Activated B cell treated with CpG ODN at 0.5 μM for 24 hours (primary cell): ENCODE measurements at regions of chr4 and their contacts with region 1.

Region 1: DNA sequence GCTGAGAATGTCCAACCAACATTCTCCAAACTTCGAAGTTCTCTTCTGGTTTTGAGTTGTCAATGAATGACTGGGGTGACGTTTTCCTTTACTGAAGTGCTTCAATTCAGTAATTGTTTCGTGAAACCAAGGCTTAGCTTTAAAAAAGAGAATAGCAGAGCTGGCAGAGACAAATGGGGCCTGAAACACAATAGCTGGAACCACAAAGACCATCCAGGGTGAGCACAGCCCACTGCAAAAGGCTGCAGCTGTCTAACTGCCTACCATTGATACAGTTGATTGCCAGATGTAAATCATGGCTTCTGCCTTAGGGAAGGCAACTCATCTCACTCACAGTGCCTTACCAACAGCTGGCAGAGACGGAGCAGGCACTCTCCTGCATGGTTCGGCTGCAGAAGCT is 78.7 kb upstream of the ZNF518B start:
- DNase-seq: no peak
- ATAC-seq: no peak
- H3K4me3 Mint-ChIP-seq: no peak overlapping the region
- H3K27ac Mint-ChIP-seq: no peak overlapping the region
- H3K4me1 Mint-ChIP-seq: peaks cover 5% of the 10 kb centered on the region
- H3K27me3 Mint-ChIP-seq: peaks cover 7% of the 10 kb centered on the region
- CTCF ChIP-seq: no peak

Region 2: DNA sequence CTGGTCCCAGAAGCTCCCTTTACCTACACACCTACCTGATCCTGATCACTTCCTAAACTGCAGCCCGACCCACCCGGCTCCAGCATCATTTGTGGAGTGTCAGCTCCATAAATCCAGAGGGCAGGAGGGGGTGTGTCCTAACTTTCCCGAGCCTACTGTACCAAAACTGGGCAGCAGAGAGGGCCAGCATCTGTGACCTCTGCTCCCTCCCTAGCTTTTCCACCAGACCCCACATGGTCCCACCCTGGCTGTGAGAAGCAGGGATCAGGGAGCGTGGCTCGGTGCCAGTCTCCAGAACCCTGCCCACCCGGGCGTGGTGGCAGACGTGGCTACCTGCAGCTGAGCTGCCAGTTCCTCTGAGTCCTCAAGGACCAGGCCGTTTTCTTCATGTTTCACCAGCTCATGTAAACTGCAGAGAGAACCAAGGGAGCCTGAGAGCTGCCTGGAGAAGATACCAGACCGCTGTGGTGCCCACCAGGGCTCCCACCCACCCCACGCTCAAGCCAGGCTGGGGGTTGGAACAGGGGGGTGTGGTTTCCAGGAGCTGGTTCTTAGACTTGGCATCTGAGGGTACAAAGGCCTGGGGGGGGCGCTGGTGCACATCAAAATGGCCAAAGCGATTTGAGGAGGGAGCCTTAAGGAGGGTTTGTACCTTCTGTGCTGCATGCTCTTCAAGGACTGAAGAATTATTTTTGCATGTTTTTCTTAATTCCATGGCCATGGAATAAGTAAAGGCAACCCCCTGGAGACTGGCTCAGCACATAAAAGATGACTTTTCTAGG is 831.2 kb before region 1 on chr4:
- CTCF ChIA-PET with region 1: no interaction called
- POLR2A ChIA-PET with region 1: no interaction called
- intact Hi-C with region 1: loop called (anchors 5 kb)
- DNase-seq: no peak
- ATAC-seq: no peak
- H3K4me3 Mint-ChIP-seq: no peak overlapping the region
- H3K27ac Mint-ChIP-seq: no peak overlapping the region
- H3K4me1 Mint-ChIP-seq: peaks cover 8% of the 10 kb centered on the region
- H3K27me3 Mint-ChIP-seq: peaks cover 3% of the 10 kb centered on the region
- CTCF ChIP-seq: no peak

Region 3: GRCh38 chr4:9762823-9763475 is 773.0 kb before region 1 on chr4:
- CTCF ChIA-PET with region 1: no interaction called
- POLR2A ChIA-PET with region 1: no interaction called
- intact Hi-C with region 1: loop called (anchors 1 kb)
- DNase-seq: no peak
- ATAC-seq: no peak
- H3K4me3 Mint-ChIP-seq: no peak overlapping the region
- H3K27ac Mint-ChIP-seq: no peak overlapping the region
- H3K4me1 Mint-ChIP-seq: no peaks in the 10 kb centered on the region
- H3K27me3 Mint-ChIP-seq: peaks cover 2% of the 10 kb centered on the region
- CTCF ChIP-seq: no peak

Region 4: GRCh38 chr4:10018818-10019461 is 517.0 kb before region 1 on chr4:
- CTCF ChIA-PET with region 1: interaction called, 4 read pairs
- POLR2A ChIA-PET with region 1: no interaction called
- intact Hi-C with region 1: loop called (anchors 2 kb)
- DNase-seq: peak; percentile 85
- ATAC-seq: peak; percentile 99
- H3K4me3 Mint-ChIP-seq: peak overlapping the region; percentile 90
- H3K27ac Mint-ChIP-seq: peak overlapping the region; percentile 88
- H3K4me1 Mint-ChIP-seq: peaks cover 37% of the 10 kb centered on the region
- H3K27me3 Mint-ChIP-seq: no peaks in the 10 kb centered on the region
- CTCF ChIP-seq: peak; percentile 69

Region 5: DNA sequence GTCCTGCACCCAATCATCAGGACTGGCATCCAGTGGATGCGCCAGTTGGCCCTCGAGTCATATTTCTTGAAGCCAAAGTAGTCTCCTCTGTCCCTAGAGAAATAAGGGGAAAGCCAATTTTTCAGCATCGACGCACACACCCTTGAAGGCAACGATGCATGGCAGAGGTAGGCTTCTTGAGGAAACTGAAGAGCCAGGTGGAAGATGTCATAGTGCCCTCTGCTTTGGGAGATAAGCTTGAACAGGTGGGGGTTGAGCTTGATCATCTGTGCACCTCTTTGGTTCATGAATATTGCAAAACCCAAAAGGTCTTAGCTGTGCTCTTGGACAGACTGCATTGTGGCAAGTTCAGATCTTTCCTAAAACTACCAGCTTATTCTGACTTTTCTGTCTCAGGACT is 384.7 kb before region 1 on chr4:
- CTCF ChIA-PET with region 1: interaction called, 15 read pairs
- POLR2A ChIA-PET with region 1: interaction called, 3 read pairs
- intact Hi-C with region 1: no loop called
- DNase-seq: no peak
- ATAC-seq: peak; percentile 97
- H3K4me3 Mint-ChIP-seq: peak overlapping the region; percentile 36
- H3K27ac Mint-ChIP-seq: no peak overlapping the region
- H3K4me1 Mint-ChIP-seq: peaks cover 29% of the 10 kb centered on the region
- H3K27me3 Mint-ChIP-seq: peaks cover 27% of the 10 kb centered on the region
- CTCF ChIP-seq: no peak

Region 6: DNA sequence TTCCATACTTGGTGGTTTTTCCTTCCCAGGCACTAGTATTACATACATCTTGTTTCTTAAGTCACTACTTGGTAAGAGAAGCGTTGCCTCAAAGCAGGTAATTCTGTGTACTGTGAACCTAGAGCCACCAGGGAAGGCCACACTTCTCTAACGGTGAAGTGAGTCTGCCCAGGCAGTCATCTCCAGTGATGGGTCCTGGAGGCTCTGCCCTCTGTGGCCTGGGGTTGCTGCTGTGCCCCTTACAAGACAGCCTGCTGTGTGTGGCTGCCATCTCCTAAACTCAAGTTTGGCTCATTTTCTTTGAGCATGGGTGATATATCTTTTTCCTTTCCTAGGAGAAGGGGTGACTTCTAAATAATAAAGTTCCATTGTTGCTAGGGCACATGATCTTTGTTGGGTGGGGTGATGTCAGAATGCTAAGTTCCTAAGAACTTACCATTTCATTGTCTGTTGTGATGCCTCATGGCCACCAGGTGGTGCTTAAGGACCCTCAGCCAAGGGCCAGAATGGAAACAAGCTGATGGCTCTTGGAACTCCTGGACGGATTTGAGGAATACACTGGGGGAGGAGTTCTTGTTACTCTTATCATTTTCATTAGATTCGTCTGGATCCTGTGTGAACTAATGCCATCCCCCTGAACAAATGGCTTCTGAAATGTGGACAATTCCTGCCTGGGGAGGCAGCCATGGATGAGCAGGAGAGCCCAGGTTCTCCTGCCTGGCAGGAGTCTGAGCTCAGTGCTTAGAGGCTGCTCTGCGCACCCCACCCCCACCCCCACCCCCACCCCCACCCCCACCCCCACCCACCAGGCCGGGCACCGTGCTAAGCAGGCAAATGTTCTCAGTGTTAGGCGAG is 378.2 kb before region 1 on chr4:
- CTCF ChIA-PET with region 1: interaction called, 44 read pairs
- POLR2A ChIA-PET with region 1: no interaction called
- intact Hi-C with region 1: loop called (anchors 1 kb)
- DNase-seq: no peak
- ATAC-seq: peak; percentile 79
- H3K4me3 Mint-ChIP-seq: no peak overlapping the region
- H3K27ac Mint-ChIP-seq: no peak overlapping the region
- H3K4me1 Mint-ChIP-seq: peaks cover 2% of the 10 kb centered on the region
- H3K27me3 Mint-ChIP-seq: peaks cover 24% of the 10 kb centered on the region
- CTCF ChIP-seq: no peak

Region 7: GRCh38 chr4:10164877-10165283 is 371.0 kb before region 1 on chr4:
- CTCF ChIA-PET with region 1: interaction called, 44 read pairs
- POLR2A ChIA-PET with region 1: no interaction called
- intact Hi-C with region 1: no loop called
- DNase-seq: no peak
- ATAC-seq: no peak
- H3K4me3 Mint-ChIP-seq: no peak overlapping the region
- H3K27ac Mint-ChIP-seq: no peak overlapping the region
- H3K4me1 Mint-ChIP-seq: no peaks in the 10 kb centered on the region
- H3K27me3 Mint-ChIP-seq: peaks cover 9% of the 10 kb centered on the region
- CTCF ChIP-seq: no peak